CD4-positive, alpha-beta memory T cell (primary cell): ENCODE measurements at regions of chr9 and their contacts with region 1.

Region 1: DNA sequence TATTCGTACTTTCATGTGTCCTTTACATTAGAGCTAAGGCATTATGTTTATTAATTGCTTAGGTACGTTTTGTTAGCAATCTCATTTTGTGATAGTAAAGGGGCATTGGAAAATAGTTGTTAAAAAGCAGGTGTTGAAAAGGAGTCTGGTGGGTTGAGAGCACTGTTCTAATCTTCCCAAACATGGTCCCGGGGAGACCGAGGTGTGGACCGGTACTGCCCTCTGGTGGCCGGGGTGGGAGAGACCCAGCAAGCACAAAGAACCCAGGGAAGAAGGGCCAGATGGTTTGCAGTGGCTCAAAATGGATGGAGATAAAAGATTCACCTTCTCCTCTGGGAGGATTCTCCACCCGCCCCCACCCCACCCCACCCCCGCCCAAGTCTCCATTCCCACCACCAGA is 26.1 kb downstream of the IDNK start:
- DNase-seq: peak; percentile 61 to 74 (median 68)
- H3K4me3 ChIP-seq: no peak overlapping the region
- H3K4me3 Mint-ChIP-seq: no peak overlapping the region
- H3K27ac ChIP-seq: no peak overlapping the region
- H3K27ac Mint-ChIP-seq: peak overlapping the region in 3 of 7 donors; percentile 3 to 52 (median 52)
- H3K4me1 ChIP-seq: no peaks in the 10 kb centered on the region
- H3K4me1 Mint-ChIP-seq: peaks cover 0 to 6% (median 2%) of the 10 kb centered on the region in 4 donors
- H3K27me3 ChIP-seq: no peaks in the 10 kb centered on the region
- H3K27me3 Mint-ChIP-seq: no peaks in the 10 kb centered on the region

Region 2: DNA sequence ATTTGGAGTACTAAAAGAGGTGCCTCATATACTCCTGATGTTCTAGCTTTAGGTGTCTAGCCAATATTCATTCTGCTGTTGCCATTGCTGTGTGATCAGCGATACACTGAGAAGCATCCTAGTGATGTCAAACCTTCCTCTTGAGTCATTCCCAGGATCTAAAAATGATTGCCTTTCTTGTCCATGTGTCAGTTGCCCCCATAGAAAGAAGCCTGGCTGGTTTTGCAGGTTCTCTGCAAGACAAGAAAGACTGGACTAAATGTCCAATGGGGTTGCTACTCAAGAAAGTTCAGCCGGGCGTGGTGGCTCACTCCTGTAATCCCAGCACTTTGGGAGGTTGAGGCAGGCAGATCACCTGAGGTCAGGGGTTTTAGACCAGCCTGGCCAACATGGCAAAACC is 909.1 kb before region 1 on chr9:
- CTCF ChIA-PET with region 1: no interaction called
- POLR2A ChIA-PET with region 1: no interaction called
- intact Hi-C with region 1: no loop called
- DNase-seq: no peak
- H3K4me3 ChIP-seq: no peak overlapping the region
- H3K4me3 Mint-ChIP-seq: no peak overlapping the region
- H3K27ac ChIP-seq: no peak overlapping the region
- H3K27ac Mint-ChIP-seq: no peak overlapping the region
- H3K4me1 ChIP-seq: no peaks in the 10 kb centered on the region
- H3K4me1 Mint-ChIP-seq: no peaks in the 10 kb centered on the region
- H3K27me3 ChIP-seq: no peaks in the 10 kb centered on the region
- H3K27me3 Mint-ChIP-seq: no peaks in the 10 kb centered on the region

Region 3: DNA sequence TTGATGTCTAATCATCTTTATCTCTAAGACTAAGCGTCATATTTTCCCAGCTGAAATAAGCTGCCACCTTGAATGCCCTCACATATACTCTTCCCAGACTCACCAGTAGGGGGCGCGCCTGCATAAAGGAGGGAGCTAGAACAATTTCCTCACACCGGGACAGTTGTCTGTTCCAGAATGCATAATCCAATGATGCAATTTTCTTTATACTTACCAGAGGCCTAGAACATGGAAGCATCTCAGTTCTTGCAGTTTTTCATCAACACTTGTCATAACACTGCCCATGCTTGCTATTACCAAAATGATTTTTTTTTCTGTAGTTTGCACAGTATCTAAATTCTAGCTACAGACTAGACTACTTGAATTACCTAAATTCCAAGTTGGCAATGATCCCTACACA is 314.8 kb before region 1 on chr9:
- CTCF ChIA-PET with region 1: interaction called, 11 read pairs
- POLR2A ChIA-PET with region 1: no interaction called
- intact Hi-C with region 1: no loop called
- DNase-seq: peak; percentile 39 to 48 (median 43)
- H3K4me3 ChIP-seq: no peak overlapping the region
- H3K4me3 Mint-ChIP-seq: no peak overlapping the region
- H3K27ac ChIP-seq: no peak overlapping the region
- H3K27ac Mint-ChIP-seq: no peak overlapping the region
- H3K4me1 ChIP-seq: no peaks in the 10 kb centered on the region
- H3K4me1 Mint-ChIP-seq: peaks cover 0 to 5% (median 2%) of the 10 kb centered on the region in 4 donors
- H3K27me3 ChIP-seq: no peaks in the 10 kb centered on the region
- H3K27me3 Mint-ChIP-seq: no peaks in the 10 kb centered on the region

Region 4: DNA sequence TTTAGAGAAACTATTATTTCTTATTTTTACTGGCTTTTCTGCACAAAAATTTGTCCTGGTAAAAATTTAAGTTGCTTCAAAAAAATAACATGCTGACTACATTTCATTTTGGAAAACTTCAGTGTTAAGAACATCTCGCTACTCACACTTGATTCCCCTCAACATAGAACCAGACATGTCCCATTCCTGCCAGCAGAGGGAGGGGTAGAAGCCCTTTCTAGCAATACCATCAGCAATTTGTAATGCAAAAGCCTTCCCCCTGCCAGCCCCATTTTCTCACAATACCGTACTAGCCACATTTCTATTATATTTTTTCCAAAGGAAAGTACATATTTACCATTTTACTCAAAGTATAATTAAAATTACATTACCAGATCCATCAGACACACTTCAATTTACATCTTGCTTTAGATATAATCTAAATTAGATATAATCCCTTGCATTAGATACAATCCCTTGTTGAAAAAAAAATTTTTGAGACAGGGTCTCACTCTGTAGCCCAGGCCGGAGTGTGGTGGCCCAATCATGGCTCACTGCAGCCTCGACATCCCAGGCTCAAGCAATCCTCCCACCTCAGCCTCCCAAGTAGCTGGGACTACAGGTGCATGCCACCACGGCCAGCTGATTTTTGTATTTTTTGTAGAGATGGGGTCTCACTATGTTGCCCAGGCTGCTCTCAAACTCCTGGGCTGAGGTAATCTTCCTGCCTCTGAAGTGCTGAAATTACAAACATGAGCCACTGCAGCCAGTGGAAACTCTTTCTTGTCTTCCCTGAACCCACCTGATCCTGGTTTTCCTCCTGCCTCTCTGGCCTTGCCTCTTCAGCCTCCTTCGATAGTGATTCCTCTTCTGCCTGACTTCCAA is 65.7 kb before region 1 on chr9:
- CTCF ChIA-PET with region 1: no interaction called
- POLR2A ChIA-PET with region 1: no interaction called
- intact Hi-C with region 1: loop called (anchors 1 kb)
- DNase-seq: peak in 4 of 5 donors; percentile 21 to 26 (median 24)
- H3K4me3 ChIP-seq: no peak overlapping the region
- H3K4me3 Mint-ChIP-seq: no peak overlapping the region
- H3K27ac ChIP-seq: no peak overlapping the region
- H3K27ac Mint-ChIP-seq: peak overlapping the region in 1 of 7 donors; percentile 19
- H3K4me1 ChIP-seq: no peaks in the 10 kb centered on the region
- H3K4me1 Mint-ChIP-seq: peaks cover 0 to 3% (median 1%) of the 10 kb centered on the region in 4 donors
- H3K27me3 ChIP-seq: no peaks in the 10 kb centered on the region
- H3K27me3 Mint-ChIP-seq: no peaks in the 10 kb centered on the region

Region 5: GRCh38 chr9:83622939-83623678 is 26.0 kb before region 1 on chr9 and contains the start of gene IDNK:
- CTCF ChIA-PET with region 1: interaction called, 118 read pairs
- POLR2A ChIA-PET with region 1: interaction called, 14 read pairs
- intact Hi-C with region 1: loop called (anchors 1 kb)
- DNase-seq: peak; percentile 66 to 72 (median 69)
- H3K4me3 ChIP-seq: peak within 1 kb of the TSS; percentile 30 to 63
- H3K4me3 Mint-ChIP-seq: peak within 1 kb of the TSS; percentile 92 to 99 (median 95)
- H3K27ac ChIP-seq: peak within 1 kb of the TSS; percentile 82
- H3K27ac Mint-ChIP-seq: peak within 1 kb of the TSS; percentile 85 to 97 (median 94)
- H3K4me1 ChIP-seq: peaks cover 24% of the 10 kb centered on the region
- H3K4me1 Mint-ChIP-seq: peaks cover 21 to 41% (median 33%) of the 10 kb centered on the region in 4 donors
- H3K27me3 ChIP-seq: no peaks in the 10 kb centered on the region
- H3K27me3 Mint-ChIP-seq: no peaks in the 10 kb centered on the region
- total RNA-seq, gene IDNK: 10.1 to 10.2 TPM

Region 6: GRCh38 chr9:83636813-83637212 is 12.3 kb before region 1 on chr9:
- CTCF ChIA-PET with region 1: interaction called, 15 read pairs
- POLR2A ChIA-PET with region 1: no interaction called
- intact Hi-C with region 1: no loop called
- DNase-seq: no peak
- H3K4me3 ChIP-seq: no peak overlapping the region
- H3K4me3 Mint-ChIP-seq: no peak overlapping the region
- H3K27ac ChIP-seq: no peak overlapping the region
- H3K27ac Mint-ChIP-seq: no peak overlapping the region
- H3K4me1 ChIP-seq: no peaks in the 10 kb centered on the region
- H3K4me1 Mint-ChIP-seq: peaks cover 0 to 4% (median 0%) of the 10 kb centered on the region in 4 donors
- H3K27me3 ChIP-seq: no peaks in the 10 kb centered on the region
- H3K27me3 Mint-ChIP-seq: no peaks in the 10 kb centered on the region